Naive thymus-derived CD4-positive, alpha-beta T cell (primary cell): ENCODE measurements at regions of chrX and their contacts with region 1.

Region 1: GRCh38 chrX:154980330-154981096 is 42.0 kb downstream of the F8 start:
- DNase-seq: peak; percentile 48 to 82 (median 74)
- ATAC-seq: peak; percentile 98
- H3K4me3 ChIP-seq: peak overlapping the region; percentile 65
- H3K4me3 Mint-ChIP-seq: peak overlapping the region; percentile 53 to 93 (median 82)
- H3K27ac ChIP-seq: peak overlapping the region; percentile 54
- H3K27ac Mint-ChIP-seq: peak overlapping the region; percentile 73 to 96 (median 88)
- H3K4me1 ChIP-seq: peaks cover 0 to 5% of the 10 kb centered on the region in 2 donors
- H3K4me1 Mint-ChIP-seq: peaks cover 0 to 16% (median 7%) of the 10 kb centered on the region in 7 donors
- H3K27me3 ChIP-seq: no peaks in the 10 kb centered on the region
- H3K27me3 Mint-ChIP-seq: no peaks in the 10 kb centered on the region

Region 2: GRCh38 chrX:154918060-154918483 is 62.4 kb before region 1 on chrX:
- CTCF ChIA-PET with region 1: no interaction called
- POLR2A ChIA-PET with region 1: no interaction called
- intact Hi-C with region 1: loop called in 1 of 2 experiments (anchors 1 kb)
- DNase-seq: peak; percentile 3 to 45 (median 20)
- ATAC-seq: no peak
- H3K4me3 ChIP-seq: no peak overlapping the region
- H3K4me3 Mint-ChIP-seq: peak overlapping the region; percentile 43 to 79 (median 69)
- H3K27ac ChIP-seq: no peak overlapping the region
- H3K27ac Mint-ChIP-seq: peak overlapping the region in 1 of 9 donors; percentile 13
- H3K4me1 ChIP-seq: no peaks in the 10 kb centered on the region
- H3K4me1 Mint-ChIP-seq: peaks cover 0 to 7% (median 0%) of the 10 kb centered on the region in 7 donors
- H3K27me3 ChIP-seq: no peaks in the 10 kb centered on the region
- H3K27me3 Mint-ChIP-seq: peaks cover 0 to 14% (median 10%) of the 10 kb centered on the region in 5 donors

Region 3: GRCh38 chrX:155001873-155002272 is 21.4 kb after region 1 on chrX:
- CTCF ChIA-PET with region 1: no interaction called
- POLR2A ChIA-PET with region 1: no interaction called
- intact Hi-C with region 1: no loop called
- DNase-seq: no peak
- ATAC-seq: no peak
- H3K4me3 ChIP-seq: no peak overlapping the region
- H3K4me3 Mint-ChIP-seq: no peak overlapping the region
- H3K27ac ChIP-seq: no peak overlapping the region
- H3K27ac Mint-ChIP-seq: no peak overlapping the region
- H3K4me1 ChIP-seq: no peaks in the 10 kb centered on the region
- H3K4me1 Mint-ChIP-seq: no peaks in the 10 kb centered on the region
- H3K27me3 ChIP-seq: no peaks in the 10 kb centered on the region
- H3K27me3 Mint-ChIP-seq: peaks cover 0 to 7% (median 0%) of the 10 kb centered on the region in 5 donors

Region 4: DNA sequence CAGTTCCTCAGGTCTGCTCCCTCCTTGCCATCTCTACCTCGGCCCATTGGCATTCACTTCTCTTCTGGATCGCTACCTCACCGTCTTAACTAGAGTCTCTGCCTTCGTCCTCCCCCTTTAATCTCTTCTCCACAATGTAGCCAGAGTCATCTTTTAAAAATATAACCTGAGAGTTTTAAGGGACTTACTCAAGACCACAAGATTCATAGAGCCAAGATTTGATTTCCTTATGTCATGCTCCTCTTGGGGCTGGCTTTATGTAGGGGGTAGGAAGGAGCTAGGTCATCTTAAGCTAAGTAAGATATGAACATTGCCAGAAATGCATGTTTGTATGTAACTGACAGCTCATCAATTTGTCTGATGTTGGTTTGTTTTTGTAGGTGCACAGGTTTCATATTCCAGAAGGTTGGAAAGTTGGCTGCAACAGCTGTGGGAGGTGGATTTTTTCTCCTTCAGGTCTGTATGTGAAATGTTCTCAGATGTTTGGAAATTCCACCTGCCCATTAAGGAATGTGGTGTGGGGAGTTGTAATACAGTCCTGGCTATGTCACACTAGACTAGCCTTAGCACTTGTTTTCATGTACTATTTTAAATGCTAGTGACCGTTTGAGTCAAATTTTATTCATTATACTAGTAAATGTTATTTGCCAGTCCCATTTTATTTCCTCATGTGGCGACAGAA is 65.8 kb after region 1 on chrX:
- CTCF ChIA-PET with region 1: no interaction called
- POLR2A ChIA-PET with region 1: no interaction called
- intact Hi-C with region 1: no loop called
- DNase-seq: no peak
- ATAC-seq: no peak
- H3K4me3 ChIP-seq: no peak overlapping the region
- H3K4me3 Mint-ChIP-seq: no peak overlapping the region
- H3K27ac ChIP-seq: no peak overlapping the region
- H3K27ac Mint-ChIP-seq: peak overlapping the region in 2 of 9 donors; percentile 5 to 69
- H3K4me1 ChIP-seq: no peaks in the 10 kb centered on the region
- H3K4me1 Mint-ChIP-seq: peaks cover 14 to 53% (median 38%) of the 10 kb centered on the region in 7 donors
- H3K27me3 ChIP-seq: no peaks in the 10 kb centered on the region
- H3K27me3 Mint-ChIP-seq: no peaks in the 10 kb centered on the region

Region 5: DNA sequence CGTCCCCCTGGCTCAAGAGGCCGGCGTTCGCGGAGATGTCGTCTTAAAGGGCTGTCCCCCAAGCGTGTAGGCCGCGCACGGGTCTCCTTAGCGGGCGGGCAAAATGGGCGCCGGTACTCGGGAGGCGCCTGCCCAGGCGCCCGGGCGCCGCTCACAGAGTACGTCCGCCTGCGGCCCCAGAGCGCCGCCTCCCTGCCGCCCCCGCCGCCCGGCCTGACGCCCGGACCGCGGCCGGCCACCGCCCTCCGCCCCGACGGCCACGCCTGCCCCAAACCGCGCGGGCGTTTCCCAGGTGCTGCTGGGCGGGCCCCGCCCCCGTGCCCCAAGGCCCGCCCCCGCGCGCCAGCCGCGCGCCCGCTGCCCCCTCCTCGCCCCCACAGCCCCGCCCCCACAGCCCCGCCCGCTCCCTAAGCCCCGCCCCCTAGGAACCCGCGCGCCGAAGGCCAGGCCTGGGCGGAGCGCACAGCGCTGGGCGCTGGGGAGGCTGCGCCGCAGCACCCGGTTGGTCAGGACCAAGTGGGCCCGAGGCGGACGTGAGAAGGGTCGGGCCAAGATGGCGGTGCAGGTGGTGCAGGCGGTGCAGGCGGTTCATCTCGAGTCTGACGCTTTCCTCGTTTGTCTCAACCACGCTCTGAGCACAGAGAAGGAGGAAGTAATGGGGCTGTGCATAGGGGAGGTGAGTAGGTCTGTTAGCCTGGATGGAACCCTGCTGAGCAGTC is 90.6 kb after region 1 on chrX and contains the starts of genes BRCC3, CMC4 and MTCP1:
- CTCF ChIA-PET with region 1: no interaction called
- POLR2A ChIA-PET with region 1: interaction called, 5 read pairs
- intact Hi-C with region 1: loop called in 1 of 2 experiments (anchors 5 kb)
- DNase-seq: peak; percentile 62 to 77 (median 74)
- ATAC-seq: peak; percentile 90
- H3K4me3 ChIP-seq: peak within 1 kb of the TSS; percentile 76
- H3K4me3 Mint-ChIP-seq: peak within 1 kb of the TSS; percentile 81 to 94 (median 89)
- H3K27ac ChIP-seq: peak within 1 kb of the TSS; percentile 82
- H3K27ac Mint-ChIP-seq: peak within 1 kb of the TSS; percentile 83 to 96 (median 94)
- H3K4me1 ChIP-seq: peaks cover 6 to 12% of the 10 kb centered on the region in 2 donors
- H3K4me1 Mint-ChIP-seq: peaks cover 30 to 62% (median 54%) of the 10 kb centered on the region in 7 donors
- H3K27me3 ChIP-seq: no peaks in the 10 kb centered on the region
- H3K27me3 Mint-ChIP-seq: no peaks in the 10 kb centered on the region
- total RNA-seq, gene BRCC3: 11.5 to 27.8 (median 15.2) TPM
- total RNA-seq, gene CMC4: 3.1 to 6.0 (median 5.1) TPM
- total RNA-seq, gene MTCP1: 10.3 to 21.5 (median 17.1) TPM

Region 6: DNA sequence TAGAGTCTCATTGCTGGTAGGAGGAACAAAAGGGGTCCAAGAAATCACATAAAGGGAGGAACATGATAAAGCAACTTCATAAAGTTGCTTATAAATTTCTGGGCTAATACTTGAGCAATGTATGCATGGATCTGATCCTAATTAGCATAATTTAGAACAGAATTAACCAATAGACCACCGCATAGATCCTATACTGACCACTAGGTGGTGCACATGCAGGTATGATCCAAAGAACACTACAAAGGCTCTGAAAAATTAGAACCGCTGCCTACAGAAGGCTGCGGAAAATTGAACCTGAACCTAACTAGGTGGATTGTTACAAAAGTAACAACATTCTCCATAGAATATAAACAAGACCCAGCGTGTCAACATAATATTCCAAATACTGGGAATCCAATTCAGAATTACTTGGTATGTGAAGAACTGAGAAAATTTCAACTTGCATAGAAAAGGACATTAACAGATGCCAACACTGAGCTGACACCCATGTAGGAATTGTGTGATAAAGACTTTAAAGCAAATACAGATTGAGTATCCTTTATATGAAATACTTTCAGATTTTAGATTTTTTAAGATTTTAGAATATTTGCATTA is 114.1 kb after region 1 on chrX:
- CTCF ChIA-PET with region 1: no interaction called
- POLR2A ChIA-PET with region 1: no interaction called
- intact Hi-C with region 1: loop called in 1 of 2 experiments (anchors 2 kb)
- DNase-seq: peak in 7 of 9 donors; percentile 18 to 57 (median 39)
- ATAC-seq: peak; percentile 87
- H3K4me3 ChIP-seq: no peak overlapping the region
- H3K4me3 Mint-ChIP-seq: no peak overlapping the region
- H3K27ac ChIP-seq: no peak overlapping the region
- H3K27ac Mint-ChIP-seq: peak overlapping the region in 1 of 9 donors; percentile 9
- H3K4me1 ChIP-seq: no peaks in the 10 kb centered on the region
- H3K4me1 Mint-ChIP-seq: peaks cover 0 to 5% (median 4%) of the 10 kb centered on the region in 7 donors
- H3K27me3 ChIP-seq: no peaks in the 10 kb centered on the region
- H3K27me3 Mint-ChIP-seq: no peaks in the 10 kb centered on the region

Region 7: GRCh38 chrX:155179346-155179986 is 199.0 kb after region 1 on chrX:
- CTCF ChIA-PET with region 1: no interaction called
- POLR2A ChIA-PET with region 1: no interaction called
- intact Hi-C with region 1: loop called in 1 of 2 experiments (anchors 1 kb)
- DNase-seq: no peak
- ATAC-seq: no peak
- H3K4me3 ChIP-seq: no peak overlapping the region
- H3K4me3 Mint-ChIP-seq: no peak overlapping the region
- H3K27ac ChIP-seq: no peak overlapping the region
- H3K27ac Mint-ChIP-seq: no peak overlapping the region
- H3K4me1 ChIP-seq: no peaks in the 10 kb centered on the region
- H3K4me1 Mint-ChIP-seq: no peaks in the 10 kb centered on the region
- H3K27me3 ChIP-seq: no peaks in the 10 kb centered on the region
- H3K27me3 Mint-ChIP-seq: no peaks in the 10 kb centered on the region

Region 8: DNA sequence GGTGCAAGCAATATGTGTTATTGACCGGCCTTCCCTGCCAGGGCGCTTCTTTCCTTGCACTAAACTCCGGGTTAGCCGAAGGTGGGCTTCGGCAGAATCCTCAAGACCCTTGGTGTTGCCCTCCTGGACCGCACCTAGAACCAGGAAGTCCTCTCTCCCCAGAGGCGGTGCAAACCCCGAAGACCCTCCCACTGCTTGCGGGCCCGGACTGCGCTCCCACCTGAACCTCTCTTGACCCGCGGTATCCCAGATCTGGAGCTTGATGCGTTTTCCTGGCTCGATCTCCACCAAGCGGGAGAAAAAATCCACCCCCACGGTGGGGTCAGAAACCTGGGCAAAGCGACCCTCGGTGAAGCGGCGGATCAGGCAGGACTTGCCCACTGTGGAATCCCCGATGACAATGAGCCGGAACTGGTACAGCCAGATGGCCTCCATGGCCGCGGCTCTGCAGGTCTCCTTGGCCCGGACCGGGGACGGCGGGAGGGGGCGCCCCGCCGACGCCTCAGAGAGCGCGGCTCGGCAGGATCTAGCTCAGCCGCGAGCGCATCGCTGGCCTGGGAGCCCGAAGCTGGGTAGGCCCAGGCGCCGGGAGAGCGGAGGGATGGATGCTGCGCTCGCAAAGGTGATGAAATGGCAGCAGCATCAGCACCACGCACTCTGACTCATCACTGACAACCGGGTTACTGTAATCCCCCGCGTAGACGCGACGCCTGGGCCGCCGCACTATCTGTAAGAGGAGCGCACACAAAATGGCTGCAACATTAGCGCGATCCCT is 283.5 kb after region 1 on chrX and contains the start of gene RAB39B:
- CTCF ChIA-PET with region 1: no interaction called
- POLR2A ChIA-PET with region 1: no interaction called
- intact Hi-C with region 1: loop called in 1 of 2 experiments (anchors 1 kb)
- DNase-seq: peak; percentile 24 to 78 (median 62)
- ATAC-seq: peak; percentile 95
- H3K4me3 ChIP-seq: peak within 1 kb of the TSS; percentile 76
- H3K4me3 Mint-ChIP-seq: peak within 1 kb of the TSS; percentile 72 to 91 (median 78)
- H3K27ac ChIP-seq: peak within 1 kb of the TSS; percentile 93
- H3K27ac Mint-ChIP-seq: peak within 1 kb of the TSS; percentile 42 to 92 (median 85)
- H3K4me1 ChIP-seq: peaks cover 5 to 6% of the 10 kb centered on the region in 2 donors
- H3K4me1 Mint-ChIP-seq: peaks cover 3 to 38% (median 27%) of the 10 kb centered on the region in 7 donors
- H3K27me3 ChIP-seq: no peaks in the 10 kb centered on the region
- H3K27me3 Mint-ChIP-seq: no peaks in the 10 kb centered on the region
- total RNA-seq, gene RAB39B: 3.9 to 13.3 (median 10.3) TPM

Region 9: DNA sequence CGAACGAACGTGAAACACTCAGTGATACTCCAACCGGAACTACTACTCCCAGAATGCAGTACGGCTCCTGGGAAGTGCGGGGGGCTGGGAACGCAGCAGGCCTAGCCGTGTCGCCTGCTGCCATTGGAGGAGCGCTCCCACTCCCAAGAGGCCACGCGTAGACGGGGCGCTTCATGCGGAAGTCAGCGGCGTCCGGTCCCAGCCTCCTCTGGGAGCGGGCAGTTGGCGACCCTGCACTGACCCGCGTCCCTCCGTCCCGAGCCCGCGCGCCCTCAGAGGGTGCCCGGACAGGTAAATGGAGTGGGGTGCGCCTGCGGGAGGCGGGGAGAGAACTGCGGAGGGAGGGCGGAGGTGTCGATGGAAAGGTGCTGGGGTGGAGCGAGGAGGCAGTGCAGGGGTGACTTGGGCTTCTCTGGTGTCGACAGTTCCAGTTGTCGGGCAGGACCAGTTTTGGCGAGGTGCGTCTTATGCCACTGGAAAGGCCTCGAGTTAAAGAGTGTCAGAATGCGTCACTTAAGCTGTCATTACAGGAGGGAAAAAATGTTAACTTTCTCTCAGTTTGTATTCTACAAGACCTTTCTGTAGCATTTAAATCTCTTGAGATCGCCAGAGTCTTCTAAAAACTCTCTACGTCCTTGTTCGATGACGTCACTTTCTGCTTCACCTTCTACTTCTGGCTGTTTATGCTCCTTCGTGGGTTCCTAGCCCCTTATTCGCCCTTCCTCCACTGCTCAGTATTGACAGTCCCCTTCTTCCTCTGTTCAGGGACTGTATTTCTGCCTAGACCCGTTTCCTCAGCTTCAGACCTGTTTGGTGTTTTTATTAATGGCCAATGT is 900.9 kb after region 1 on chrX and contains the start of gene VAMP7:
- CTCF ChIA-PET with region 1: no interaction called
- POLR2A ChIA-PET with region 1: no interaction called
- intact Hi-C with region 1: loop called in 1 of 2 experiments (anchors 1 kb)
- DNase-seq: peak; percentile 47 to 82 (median 71)
- ATAC-seq: peak; percentile 99
- H3K4me3 ChIP-seq: peak within 1 kb of the TSS; percentile 55
- H3K4me3 Mint-ChIP-seq: peak within 1 kb of the TSS; percentile 86 to 97 (median 92)
- H3K27ac ChIP-seq: peak within 1 kb of the TSS; percentile 78
- H3K27ac Mint-ChIP-seq: peak within 1 kb of the TSS; percentile 63 to 98 (median 92)
- H3K4me1 ChIP-seq: peaks cover 0 to 5% of the 10 kb centered on the region in 2 donors
- H3K4me1 Mint-ChIP-seq: peaks cover 19 to 40% (median 34%) of the 10 kb centered on the region in 7 donors
- H3K27me3 ChIP-seq: no peaks in the 10 kb centered on the region
- H3K27me3 Mint-ChIP-seq: peaks cover 0 to 6% (median 4%) of the 10 kb centered on the region in 5 donors
- total RNA-seq, gene VAMP7: 18.5 to 32.5 (median 21.0) TPM